Pancreas (tissue), 10 donors: ENCODE measurements at regions of chr17 and their contacts with region 1.

Region 1: DNA sequence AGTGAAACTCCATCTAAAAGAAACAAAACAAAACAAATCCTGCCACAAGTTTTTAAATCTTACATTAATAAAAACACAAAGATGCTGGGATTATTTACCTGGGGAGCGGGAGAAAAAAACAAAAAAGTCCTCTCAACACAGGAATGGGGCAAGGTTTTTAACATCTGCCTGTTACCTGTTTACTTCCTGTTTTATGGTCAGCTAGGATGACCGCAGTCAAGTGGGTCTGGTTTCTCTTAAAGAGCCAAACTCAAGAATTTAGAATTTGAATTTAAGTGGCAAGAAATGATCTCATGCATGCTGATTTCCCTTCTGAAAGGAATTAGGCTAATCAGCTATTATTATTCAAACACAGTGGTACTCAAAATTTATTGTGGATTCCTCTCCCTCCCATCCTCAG is 39.7 kb upstream of the TBC1D3K start:
- DNase-seq: no peak
- ATAC-seq: no peak
- H3K4me3 ChIP-seq: no peak overlapping the region
- H3K27ac ChIP-seq: no peak overlapping the region
- H3K4me1 ChIP-seq: no peaks in the 10 kb centered on the region
- H3K27me3 ChIP-seq: no peaks in the 10 kb centered on the region
- CTCF ChIP-seq: no peak

Region 2: GRCh38 chr17:37671824-37672547 is 212.5 kb before region 1 on chr17:
- intact Hi-C with region 1: loop called in 1 of 3 experiments (anchors 10 kb)
- DNase-seq: no peak
- ATAC-seq: no peak
- H3K4me3 ChIP-seq: no peak overlapping the region
- H3K27ac ChIP-seq: no peak overlapping the region
- H3K4me1 ChIP-seq: no peaks in the 10 kb centered on the region
- H3K27me3 ChIP-seq: no peaks in the 10 kb centered on the region
- CTCF ChIP-seq: no peak